Activated CD4-positive, alpha-beta T cell treated with anti-CD3 and anti-CD28 coated beads for 36 hours (primary cell): ENCODE measurements at regions of chr11 and their contacts with region 1.

Region 1: DNA sequence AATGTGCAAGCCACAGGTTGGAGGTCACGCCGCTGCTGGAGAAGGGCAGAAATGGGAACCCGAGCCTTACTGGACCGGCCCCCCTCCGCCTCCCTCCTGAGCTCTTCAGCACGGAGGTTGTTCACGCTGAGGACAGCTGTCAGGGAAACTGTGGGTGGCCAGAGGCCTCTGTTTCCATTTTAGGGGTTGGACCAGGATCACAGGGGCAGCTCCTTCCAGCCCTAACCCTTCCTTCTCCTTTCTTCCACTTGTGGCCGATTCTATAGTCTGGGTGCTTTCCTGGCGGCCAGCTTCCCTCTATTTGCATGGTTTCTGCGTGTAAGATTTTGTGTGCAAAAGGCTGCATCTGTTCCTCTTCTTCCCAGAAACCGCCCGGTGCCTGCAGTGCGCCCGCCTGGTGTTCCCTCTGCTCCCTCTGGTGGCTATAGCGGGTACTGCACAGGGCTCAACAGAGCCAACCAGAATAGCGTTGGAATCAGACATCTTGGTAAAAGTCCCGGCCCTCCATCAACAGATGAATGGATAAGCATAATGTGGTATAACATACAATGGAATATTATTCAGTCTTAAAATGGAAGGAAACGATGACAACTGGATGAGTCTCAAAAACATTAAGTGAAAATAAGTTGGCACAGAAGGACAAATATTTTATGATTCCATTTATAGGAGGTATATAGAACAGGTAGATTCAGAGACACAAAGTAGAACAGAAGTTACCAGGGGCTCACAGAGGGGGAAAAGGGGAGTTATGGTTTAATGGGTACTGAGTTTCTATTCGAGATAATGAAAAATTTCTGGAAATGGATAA is 8.4 kb upstream of the SLC22A8 start:
- DNase-seq: peak; percentile 93
- ATAC-seq: peak; percentile 84
- H3K4me3 Mint-ChIP-seq: no peak overlapping the region
- H3K27ac Mint-ChIP-seq: no peak overlapping the region
- H3K4me1 Mint-ChIP-seq: peaks cover 4% of the 10 kb centered on the region
- H3K27me3 Mint-ChIP-seq: peaks cover 10% of the 10 kb centered on the region

Region 2: GRCh38 chr11:62922658-62923431 is 101.2 kb before region 1 on chr11:
- CTCF ChIA-PET with region 1: interaction called, 12 read pairs
- POLR2A ChIA-PET with region 1: no interaction called
- intact Hi-C with region 1: loop called in 1 of 2 experiments (anchors 5 kb)
- DNase-seq: peak; percentile 83
- ATAC-seq: peak; percentile 68
- H3K4me3 Mint-ChIP-seq: peak overlapping the region; percentile 59
- H3K27ac Mint-ChIP-seq: peak overlapping the region; percentile 7
- H3K4me1 Mint-ChIP-seq: peaks cover 32% of the 10 kb centered on the region
- H3K27me3 Mint-ChIP-seq: peaks cover 57% of the 10 kb centered on the region

Region 3: DNA sequence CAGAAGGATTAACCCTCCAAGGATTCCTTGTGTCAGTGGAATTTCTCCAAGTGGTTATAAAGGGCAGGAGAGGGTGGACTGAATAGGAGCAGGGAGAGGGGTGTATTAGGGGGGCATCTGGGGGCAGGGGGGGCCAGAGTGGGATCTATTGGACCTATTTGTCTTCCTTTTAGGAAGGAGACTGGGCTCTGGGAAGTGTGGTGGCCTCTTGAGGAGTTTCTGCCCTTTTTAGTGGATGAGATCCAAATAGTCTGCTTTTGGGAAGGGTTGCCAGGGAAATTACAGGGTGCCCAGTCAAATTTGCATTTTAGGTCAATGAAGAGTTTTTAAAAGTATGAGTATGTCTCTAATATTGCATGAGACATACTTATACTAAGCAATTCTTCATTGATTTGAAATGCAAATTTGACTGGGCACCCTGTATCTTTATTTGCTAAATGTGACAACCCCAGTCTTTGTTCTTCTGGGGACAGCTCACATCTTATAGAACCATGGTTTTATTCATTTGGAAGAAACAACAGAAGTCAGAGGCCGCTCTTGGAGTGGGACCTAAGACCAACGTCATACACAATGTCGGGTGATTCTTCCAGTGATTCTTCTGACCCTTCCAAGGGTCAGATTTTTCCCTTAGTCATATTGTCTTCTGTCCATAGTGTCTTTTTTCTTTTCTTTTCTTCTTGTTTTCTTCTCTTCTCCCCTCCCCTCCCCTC is 38.8 kb before region 1 on chr11:
- CTCF ChIA-PET with region 1: interaction called, 11 read pairs
- POLR2A ChIA-PET with region 1: no interaction called
- intact Hi-C with region 1: no loop called
- DNase-seq: no peak
- ATAC-seq: no peak
- H3K4me3 Mint-ChIP-seq: no peak overlapping the region
- H3K27ac Mint-ChIP-seq: no peak overlapping the region
- H3K4me1 Mint-ChIP-seq: no peaks in the 10 kb centered on the region
- H3K27me3 Mint-ChIP-seq: peaks cover 7% of the 10 kb centered on the region

Region 4: GRCh38 chr11:63012430-63012829 is 11.6 kb before region 1 on chr11:
- CTCF ChIA-PET with region 1: interaction called, 12 read pairs
- POLR2A ChIA-PET with region 1: no interaction called
- intact Hi-C with region 1: no loop called
- DNase-seq: no peak
- ATAC-seq: no peak
- H3K4me3 Mint-ChIP-seq: no peak overlapping the region
- H3K27ac Mint-ChIP-seq: no peak overlapping the region
- H3K4me1 Mint-ChIP-seq: no peaks in the 10 kb centered on the region
- H3K27me3 Mint-ChIP-seq: peaks cover 3% of the 10 kb centered on the region